Left cardiac atrium (tissue), 4 donors: ENCODE measurements at regions of chr1 and their contacts with region 1.

Region 1: GRCh38 chr1:10694633-10695627 is 101.5 kb downstream of the CASZ1 start:
- DNase-seq: peak; percentile 94
- ATAC-seq: peak; percentile 80 to 90

Region 2: GRCh38 chr1:10615332-10615731 is 79.6 kb before region 1 on chr1:
- intact Hi-C with region 1: no loop called
- DNase-seq: no peak
- ATAC-seq: no peak

Region 3: GRCh38 chr1:10663678-10664035 is 31.3 kb before region 1 on chr1:
- intact Hi-C with region 1: no loop called
- DNase-seq: peak; percentile 65
- ATAC-seq: peak; percentile 70 to 87

Region 4: GRCh38 chr1:10745886-10746455 is 51.0 kb after region 1 on chr1:
- intact Hi-C with region 1: loop called in 1 of 2 experiments (anchors 10 kb)
- DNase-seq: peak; percentile 60
- ATAC-seq: peak; percentile 77 to 91

Region 5: GRCh38 chr1:10788592-10789006 is 93.7 kb after region 1 on chr1:
- intact Hi-C with region 1: loop called (anchors 5 to 10 kb)
- DNase-seq: peak; percentile 62
- ATAC-seq: peak; percentile 93 to 94